Testis (tissue), 5 donors: ENCODE measurements at regions of chr1 and their contacts with region 1.

Region 1: DNA sequence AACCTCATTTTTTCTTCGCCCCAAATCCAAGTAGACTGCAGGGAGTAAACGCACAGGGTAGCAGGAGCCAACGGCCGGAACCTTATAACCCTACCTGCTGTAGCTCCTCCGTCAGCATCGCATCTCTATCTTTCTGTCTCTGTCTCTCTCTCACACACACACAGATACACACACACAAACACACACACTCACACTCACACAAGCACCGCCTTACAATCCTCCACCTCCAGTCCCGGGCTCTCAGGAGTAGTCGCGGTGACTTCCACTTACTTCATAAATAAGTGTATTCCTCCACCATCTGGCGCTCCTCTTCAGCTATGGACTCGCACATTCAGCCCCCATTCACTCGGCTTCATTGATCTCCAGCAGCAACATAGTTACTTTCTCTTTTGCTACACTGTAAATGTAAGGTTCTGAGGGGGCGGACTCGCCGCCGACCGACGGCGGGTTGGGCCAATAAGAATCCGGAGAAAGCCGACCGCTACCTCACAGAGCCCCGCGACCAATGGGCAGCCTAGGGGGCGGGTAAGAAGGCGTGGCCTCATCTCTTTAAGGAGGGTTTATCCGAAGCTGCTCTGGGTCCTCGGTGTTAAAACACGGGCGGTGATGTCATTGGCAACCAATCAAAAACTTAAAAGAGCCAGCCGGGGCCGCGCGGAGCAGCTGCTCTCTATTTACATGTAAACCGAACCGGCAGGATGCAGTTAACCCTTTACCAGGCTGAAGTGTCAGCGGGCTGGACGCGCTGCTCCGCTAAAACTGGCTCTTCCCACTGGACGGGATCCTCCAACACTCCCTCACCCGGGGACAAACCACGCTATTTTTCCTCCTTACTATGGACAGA is at the start of gene DUSP10:
- DNase-seq: peak; percentile 100
- H3K4me3 ChIP-seq: peak within 1 kb of the TSS; percentile 73 to 82
- H3K27ac ChIP-seq: peak within 1 kb of the TSS; percentile 88 to 98
- H3K4me1 ChIP-seq: no peaks in the 10 kb centered on the region
- H3K27me3 ChIP-seq: no peaks in the 10 kb centered on the region
- CTCF ChIP-seq: no peak
- POLR2A ChIP-seq: peak; percentile 88
- total RNA-seq, gene DUSP10: 12.3 to 14.6 TPM

Region 2: GRCh38 chr1:221335161-221336101 is 406.5 kb before region 1 on chr1:
- intact Hi-C with region 1: no loop called
- DNase-seq: peak; percentile 41
- H3K4me3 ChIP-seq: no peak overlapping the region
- H3K27ac ChIP-seq: peak overlapping the region; percentile 52 to 83
- H3K4me1 ChIP-seq: peaks cover 24% of the 10 kb centered on the region
- H3K27me3 ChIP-seq: no peaks in the 10 kb centered on the region
- CTCF ChIP-seq: no peak
- POLR2A ChIP-seq: no peak

Region 3: DNA sequence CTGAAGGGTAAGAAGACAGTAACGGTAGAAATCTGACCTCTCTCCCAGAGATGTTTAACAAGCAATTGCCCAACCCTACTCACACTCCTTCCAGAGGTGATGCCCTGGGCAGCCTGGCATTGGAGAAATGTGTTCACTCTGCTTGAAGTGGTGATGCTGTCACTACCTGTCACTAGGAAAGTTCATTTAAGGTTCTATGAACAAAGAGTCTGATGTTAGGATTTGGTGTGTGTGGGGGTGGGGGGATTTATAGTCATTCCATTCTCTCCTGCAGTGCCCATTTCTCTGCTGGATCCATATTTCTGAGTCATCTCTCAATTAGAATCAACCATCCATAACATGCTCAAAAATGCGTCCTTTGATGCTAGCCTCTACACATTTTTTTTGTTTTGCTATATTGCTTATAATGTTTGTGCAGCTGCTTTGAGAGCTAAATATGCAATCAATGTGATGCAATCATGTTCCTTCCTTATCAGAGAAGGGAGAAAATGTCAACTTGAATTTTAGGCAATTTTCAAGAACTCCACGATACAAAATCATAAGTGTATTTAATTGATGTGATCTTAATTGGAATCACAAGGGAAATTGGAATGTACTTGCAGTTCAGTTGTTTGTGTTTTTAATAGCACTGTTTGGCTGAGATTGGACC is 173.9 kb before region 1 on chr1:
- intact Hi-C with region 1: loop called (anchors 10 kb)
- DNase-seq: no peak
- H3K4me3 ChIP-seq: no peak overlapping the region
- H3K27ac ChIP-seq: no peak overlapping the region
- H3K4me1 ChIP-seq: peaks cover 8% of the 10 kb centered on the region
- H3K27me3 ChIP-seq: no peaks in the 10 kb centered on the region
- CTCF ChIP-seq: no peak
- POLR2A ChIP-seq: no peak

Region 4: DNA sequence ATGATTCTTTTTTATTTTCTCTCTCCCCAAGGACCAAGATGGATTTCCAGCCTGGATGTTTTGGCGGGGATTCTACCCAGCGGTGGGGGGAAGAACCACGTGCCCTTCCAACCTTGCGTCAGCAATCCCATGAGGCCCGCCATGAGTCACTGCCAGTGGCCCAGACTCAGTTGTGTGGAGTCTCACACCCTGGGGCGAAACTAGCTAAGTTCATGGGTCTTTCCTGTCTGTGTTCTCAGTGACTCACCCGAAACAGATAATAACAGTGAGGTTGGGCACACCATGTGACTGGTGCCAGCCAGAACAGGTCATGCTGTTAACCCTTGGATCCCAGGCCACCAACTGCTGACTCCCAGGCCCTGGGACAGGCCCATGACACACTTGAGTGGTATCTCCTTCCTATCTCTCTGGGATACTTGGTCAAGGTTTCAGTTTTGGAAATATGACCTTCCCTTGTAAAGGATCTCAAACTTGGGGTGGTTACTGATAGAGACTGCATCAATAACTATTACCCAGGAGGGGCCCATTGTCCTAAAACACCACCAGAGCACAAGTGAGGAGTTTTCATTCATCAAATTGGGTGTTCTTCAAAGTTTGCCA is 98.0 kb after region 1 on chr1:
- intact Hi-C with region 1: no loop called
- DNase-seq: peak; percentile 23
- H3K4me3 ChIP-seq: no peak overlapping the region
- H3K27ac ChIP-seq: no peak overlapping the region
- H3K4me1 ChIP-seq: no peaks in the 10 kb centered on the region
- H3K27me3 ChIP-seq: no peaks in the 10 kb centered on the region
- CTCF ChIP-seq: no peak
- POLR2A ChIP-seq: no peak